Panc1 (cell line): ENCODE measurements at regions of chr11 and their contacts with region 1.

Region 1: GRCh38 chr11:98296091-98296880 is 724.5 kb upstream of the CNTN5 start:
- DNase-seq: no peak
- ATAC-seq: no peak
- H3K4me3 ChIP-seq: no peak overlapping the region
- H3K27ac ChIP-seq: no peak overlapping the region
- H3K4me1 ChIP-seq: no peaks in the 10 kb centered on the region
- H3K27me3 ChIP-seq: no peaks in the 10 kb centered on the region
- CTCF ChIP-seq: no peak

Region 2: DNA sequence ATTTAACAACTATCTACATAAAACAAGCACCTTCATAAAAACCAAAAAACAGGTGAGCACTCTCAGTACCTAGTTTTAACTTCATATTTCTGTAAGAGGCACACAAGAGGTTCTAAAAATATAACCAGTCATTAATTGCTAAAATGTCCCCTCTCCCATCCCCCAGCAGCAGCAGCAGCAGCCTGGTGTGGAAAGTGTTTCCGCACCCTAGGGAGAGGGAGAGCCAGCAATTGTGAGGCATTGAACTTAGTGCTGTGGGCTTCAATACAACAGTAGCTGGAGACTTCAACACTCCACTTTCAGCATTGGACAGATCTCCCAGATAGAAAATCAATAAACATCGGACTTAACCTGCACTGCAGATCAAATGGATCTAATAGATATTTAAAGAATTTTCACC is 748.0 kb before region 1 on chr11:
- CTCF ChIA-PET with region 1: no interaction called
- POLR2A ChIA-PET with region 1: interaction called, 10 read pairs
- in situ Hi-C with region 1: no loop called
- intact Hi-C with region 1: no loop called
- DNase-seq: no peak
- ATAC-seq: no peak
- H3K4me3 ChIP-seq: no peak overlapping the region
- H3K27ac ChIP-seq: no peak overlapping the region
- H3K4me1 ChIP-seq: no peaks in the 10 kb centered on the region
- H3K27me3 ChIP-seq: no peaks in the 10 kb centered on the region
- CTCF ChIP-seq: no peak

Region 3: DNA sequence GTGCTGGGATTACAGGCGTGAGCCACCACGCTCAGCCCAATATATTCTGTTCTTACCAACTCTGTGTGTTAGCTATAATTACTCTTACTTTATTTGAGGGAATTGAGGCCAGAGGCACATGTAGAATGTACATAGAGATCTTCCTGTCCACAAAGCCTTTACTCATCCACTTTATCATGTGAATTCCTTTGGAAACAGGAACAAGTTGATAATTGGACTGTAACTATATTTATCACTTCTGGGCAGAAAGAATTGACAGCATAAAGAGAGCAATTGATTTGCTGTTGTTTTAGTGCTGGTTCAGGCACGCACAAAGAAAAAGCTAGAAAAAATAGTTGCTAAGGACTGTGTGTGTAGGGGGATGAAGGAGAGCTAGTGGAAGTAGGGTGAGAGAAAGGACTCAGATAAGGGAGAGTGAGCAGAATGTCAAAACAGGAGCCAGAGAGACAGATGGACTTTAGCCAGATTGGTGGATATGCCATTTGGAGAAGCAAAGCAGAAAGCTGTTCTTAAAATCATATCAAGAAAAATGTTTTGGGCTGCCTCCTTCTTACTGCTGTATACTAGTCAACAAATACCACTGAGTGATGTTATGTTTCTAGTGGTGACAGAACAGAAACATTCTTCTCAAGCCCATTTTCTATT is 205.3 kb before region 1 on chr11:
- CTCF ChIA-PET with region 1: no interaction called
- POLR2A ChIA-PET with region 1: no interaction called
- in situ Hi-C with region 1: no loop called
- intact Hi-C with region 1: no loop called
- DNase-seq: no peak
- ATAC-seq: no peak
- H3K4me3 ChIP-seq: no peak overlapping the region
- H3K27ac ChIP-seq: no peak overlapping the region
- H3K4me1 ChIP-seq: no peaks in the 10 kb centered on the region
- H3K27me3 ChIP-seq: no peaks in the 10 kb centered on the region
- CTCF ChIP-seq: no peak